ENCODE measurements at regions of chr17 and their contacts with region 1.

Region 1: DNA sequence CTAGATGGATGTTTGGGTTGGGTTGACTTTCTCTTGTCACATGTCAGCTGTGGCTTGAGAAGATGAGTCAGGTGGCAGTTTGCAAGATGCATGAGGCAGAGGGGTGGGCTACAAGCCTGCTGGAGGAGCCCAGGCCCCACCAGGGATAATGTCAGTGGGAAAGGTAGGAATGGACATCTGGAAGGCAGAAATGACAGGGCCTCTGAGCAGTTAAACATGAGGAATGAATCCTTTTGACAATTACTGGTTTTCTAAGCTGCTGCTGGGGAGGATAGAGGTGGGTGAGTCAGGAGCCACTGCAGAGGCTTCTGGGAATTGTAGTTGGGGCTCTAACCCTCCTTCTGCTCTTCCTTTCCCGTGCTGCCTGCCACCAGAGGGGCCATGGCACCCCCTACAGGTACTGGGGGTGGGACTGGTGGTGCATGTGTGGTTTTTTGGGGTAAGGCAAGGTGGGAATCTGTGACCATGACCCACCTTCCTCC is 15.7 kb downstream of the SLC52A1 start:
- DNase-seq: peak; percentile 76
- H3K4me3 ChIP-seq: no peak overlapping the region
- H3K27ac ChIP-seq: no peak overlapping the region
- H3K4me1 ChIP-seq: peaks cover 34% of the 10 kb centered on the region
- CTCF ChIP-seq: peak; percentile 85

Region 2: GRCh38 chr17:4908301-4908700 is 111.2 kb before region 1 on chr17:
- CTCF ChIA-PET with region 1: no interaction called
- POLR2A ChIA-PET with region 1: no interaction called
- intact Hi-C with region 1: loop called (anchors 2 kb)
- DNase-seq: no peak
- H3K4me3 ChIP-seq: no peak overlapping the region
- H3K27ac ChIP-seq: no peak overlapping the region
- H3K4me1 ChIP-seq: peaks cover 3% of the 10 kb centered on the region
- CTCF ChIP-seq: no peak

Region 3: DNA sequence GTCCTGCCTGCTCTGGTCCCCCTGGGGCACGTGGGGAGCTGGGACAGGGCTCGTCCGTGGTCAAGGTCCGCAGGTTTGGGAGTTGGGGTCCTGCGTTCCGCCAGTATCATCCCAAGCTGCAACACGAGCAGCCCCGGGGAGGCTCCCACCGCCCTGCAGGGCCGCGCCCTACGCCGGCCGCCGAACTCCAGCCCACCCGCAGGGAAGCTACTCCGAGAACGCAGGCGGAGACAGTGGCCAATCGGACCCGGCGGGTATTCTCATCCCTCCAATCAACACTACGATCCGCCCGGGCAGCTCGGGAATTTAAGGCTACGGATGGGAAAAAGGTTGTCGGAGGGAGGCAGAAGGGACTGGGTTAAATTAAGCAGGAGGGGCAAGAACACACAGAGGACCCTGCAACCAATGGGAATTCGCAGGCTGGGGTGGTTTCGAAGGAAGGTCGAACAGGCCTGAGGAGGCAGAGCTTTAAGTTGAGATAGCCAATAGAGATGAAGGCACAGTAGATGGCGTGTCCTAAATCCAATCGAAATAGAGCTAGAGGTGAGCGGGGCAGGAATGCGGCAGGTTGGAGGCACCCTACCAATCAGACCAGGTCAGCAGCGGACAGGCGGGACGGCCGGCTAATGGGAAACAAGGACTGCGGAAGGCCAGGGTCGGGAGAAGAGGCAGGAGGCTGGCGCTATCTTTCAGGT is 52.5 kb before region 1 on chr17:
- CTCF ChIA-PET with region 1: no interaction called
- POLR2A ChIA-PET with region 1: interaction called, 7 read pairs
- intact Hi-C with region 1: loop called (anchors 5 kb)
- DNase-seq: peak; percentile 98
- H3K4me3 ChIP-seq: peak overlapping the region; percentile 78
- H3K27ac ChIP-seq: peak overlapping the region; percentile 77
- H3K4me1 ChIP-seq: peaks cover 23% of the 10 kb centered on the region
- CTCF ChIP-seq: no peak

Region 4: GRCh38 chr17:4980644-4981216 is 38.8 kb before region 1 on chr17:
- CTCF ChIA-PET with region 1: no interaction called
- POLR2A ChIA-PET with region 1: no interaction called
- intact Hi-C with region 1: loop called (anchors 1 kb)
- DNase-seq: peak; percentile 83
- H3K4me3 ChIP-seq: no peak overlapping the region
- H3K27ac ChIP-seq: no peak overlapping the region
- H3K4me1 ChIP-seq: peaks cover 28% of the 10 kb centered on the region
- CTCF ChIP-seq: peak; percentile 90

Region 5: GRCh38 chr17:4986951-4987766 is 32.4 kb before region 1 on chr17 and contains the start of gene CAMTA2:
- CTCF ChIA-PET with region 1: no interaction called
- POLR2A ChIA-PET with region 1: interaction called, 10 read pairs
- intact Hi-C with region 1: loop called (anchors 2 kb)
- DNase-seq: peak; percentile 85
- H3K4me3 ChIP-seq: peak within 1 kb of the TSS; percentile 93
- H3K27ac ChIP-seq: peak within 1 kb of the TSS; percentile 48
- H3K4me1 ChIP-seq: peaks cover 27% of the 10 kb centered on the region
- CTCF ChIP-seq: peak; percentile 89
- total RNA-seq, gene CAMTA2: 8.7 and 9.7 TPM in 2 replicates

Region 6: DNA sequence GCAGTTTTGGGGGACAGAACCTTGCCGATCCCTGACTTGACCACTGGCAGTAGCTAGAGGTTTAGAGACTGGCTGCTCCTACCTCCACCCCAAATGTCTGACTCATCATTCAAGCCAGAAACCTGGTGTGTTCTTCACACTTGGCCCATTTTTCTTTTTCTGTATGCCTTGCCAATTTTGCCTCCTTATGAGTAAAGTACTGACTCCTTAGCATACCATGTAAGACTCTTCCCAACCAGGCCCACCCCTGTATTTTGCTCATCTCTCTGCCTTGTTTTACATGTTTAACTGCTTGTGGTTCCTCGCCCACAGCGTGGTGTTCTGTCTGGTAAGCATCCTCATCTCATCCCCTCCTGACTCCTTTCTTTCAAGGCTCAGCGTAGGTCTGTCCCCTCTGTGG is 362.0 kb after region 1 on chr17:
- CTCF ChIA-PET with region 1: no interaction called
- POLR2A ChIA-PET with region 1: no interaction called
- intact Hi-C with region 1: no loop called
- DNase-seq: no peak
- H3K4me3 ChIP-seq: no peak overlapping the region
- H3K27ac ChIP-seq: no peak overlapping the region
- H3K4me1 ChIP-seq: no peaks in the 10 kb centered on the region
- CTCF ChIP-seq: no peak